Activated CD4-positive, alpha-beta memory T cell treated with anti-CD3 and anti-CD28 coated beads for 36 hours (primary cell): ENCODE measurements at regions of chr22 and their contacts with region 1.

Region 1: DNA sequence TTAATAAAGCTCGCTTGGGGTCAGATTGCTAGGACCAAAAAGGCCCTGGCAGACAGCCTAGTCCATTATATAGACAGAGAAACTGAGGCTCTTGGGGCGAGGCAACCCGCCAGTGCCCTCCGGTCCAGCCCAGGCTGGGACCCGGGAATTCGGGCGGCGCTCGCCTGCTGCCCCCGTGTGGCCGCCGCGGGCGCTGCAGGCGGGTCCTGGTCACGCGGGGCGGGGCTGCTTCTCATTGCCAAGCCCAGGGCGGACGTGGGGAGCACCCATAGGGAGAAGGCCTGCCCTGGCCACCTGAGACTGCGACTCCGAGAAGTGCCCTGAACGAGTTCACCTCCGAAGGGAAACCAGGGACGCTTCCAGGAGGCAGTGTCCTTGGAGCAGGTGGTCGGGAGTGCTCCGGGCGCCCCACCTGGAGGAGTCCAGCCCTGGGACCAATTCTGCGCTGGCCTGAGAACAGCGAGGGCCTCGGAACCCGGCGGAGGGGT is 36.0 kb upstream of the CSNK1E start:
- DNase-seq: peak; percentile 76
- H3K4me3 Mint-ChIP-seq: no peak overlapping the region
- H3K27ac Mint-ChIP-seq: no peak overlapping the region
- H3K4me1 Mint-ChIP-seq: no peaks in the 10 kb centered on the region
- H3K27me3 Mint-ChIP-seq: no peaks in the 10 kb centered on the region

Region 2: GRCh38 chr22:38104084-38104483 is 249.1 kb before region 1 on chr22:
- CTCF ChIA-PET with region 1: no interaction called
- POLR2A ChIA-PET with region 1: no interaction called
- intact Hi-C with region 1: loop called (anchors 10 kb)
- DNase-seq: no peak
- H3K4me3 Mint-ChIP-seq: no peak overlapping the region
- H3K27ac Mint-ChIP-seq: no peak overlapping the region
- H3K4me1 Mint-ChIP-seq: no peaks in the 10 kb centered on the region
- H3K27me3 Mint-ChIP-seq: no peaks in the 10 kb centered on the region

Region 3: GRCh38 chr22:38262051-38262795 is 91.0 kb before region 1 on chr22:
- CTCF ChIA-PET with region 1: interaction called, 5 read pairs
- POLR2A ChIA-PET with region 1: no interaction called
- intact Hi-C with region 1: loop called (anchors 1 kb)
- DNase-seq: peak; percentile 71
- H3K4me3 Mint-ChIP-seq: no peak overlapping the region
- H3K27ac Mint-ChIP-seq: peak overlapping the region; percentile 58
- H3K4me1 Mint-ChIP-seq: peaks cover 42% of the 10 kb centered on the region
- H3K27me3 Mint-ChIP-seq: no peaks in the 10 kb centered on the region

Region 4: DNA sequence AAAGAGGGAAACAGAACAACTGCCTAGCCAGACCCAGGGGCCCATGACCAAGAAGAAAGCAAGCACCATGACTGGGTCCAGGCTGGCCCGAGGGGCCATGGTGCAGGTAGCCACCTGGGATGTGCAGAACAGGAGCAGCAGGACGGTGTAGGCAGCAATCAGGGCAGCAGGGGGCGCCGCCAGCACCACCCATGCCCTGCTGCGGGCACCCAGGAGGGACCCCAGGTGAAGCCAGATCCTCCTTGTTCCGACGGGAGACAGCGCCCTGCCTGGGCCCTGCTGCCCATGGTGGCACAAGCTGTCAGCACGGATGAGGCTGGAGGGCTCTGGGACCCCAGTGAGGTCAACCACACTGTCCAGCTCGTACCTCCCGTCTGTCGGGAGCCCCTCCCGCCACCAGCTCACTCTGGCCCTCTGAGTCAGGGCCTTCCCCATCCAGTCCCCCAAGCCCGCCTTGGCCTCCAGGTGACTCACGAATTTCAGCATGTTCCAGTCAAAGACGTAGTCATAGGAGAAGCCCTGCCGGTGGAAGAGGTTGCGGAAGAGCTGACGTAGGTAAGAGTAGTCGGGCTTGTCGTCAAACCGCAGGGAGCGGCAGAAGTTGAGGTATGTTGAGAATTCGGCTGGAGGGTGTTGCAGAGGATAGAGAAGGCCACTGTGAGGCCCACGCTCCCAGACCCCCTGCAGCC is 54.7 kb before region 1 on chr22:
- CTCF ChIA-PET with region 1: interaction called, 5 read pairs
- POLR2A ChIA-PET with region 1: no interaction called
- intact Hi-C with region 1: loop called (anchors 2 kb)
- DNase-seq: peak; percentile 60
- H3K4me3 Mint-ChIP-seq: no peak overlapping the region
- H3K27ac Mint-ChIP-seq: no peak overlapping the region
- H3K4me1 Mint-ChIP-seq: no peaks in the 10 kb centered on the region
- H3K27me3 Mint-ChIP-seq: no peaks in the 10 kb centered on the region

Region 5: GRCh38 chr22:38454353-38455075 is 101.3 kb after region 1 on chr22:
- CTCF ChIA-PET with region 1: no interaction called
- POLR2A ChIA-PET with region 1: no interaction called
- intact Hi-C with region 1: no loop called
- DNase-seq: peak; percentile 17
- H3K4me3 Mint-ChIP-seq: peak overlapping the region; percentile 68
- H3K27ac Mint-ChIP-seq: no peak overlapping the region
- H3K4me1 Mint-ChIP-seq: peaks cover 9% of the 10 kb centered on the region
- H3K27me3 Mint-ChIP-seq: peaks cover 73% of the 10 kb centered on the region